Sigmoid colon (tissue), 7 donors: ENCODE measurements at regions of chr20 and their contacts with region 1.

Region 1: GRCh38 chr20:62710886-62711493 is 2.4 kb downstream of the NTSR1 start:
- DNase-seq: peak; percentile 89
- H3K4me3 ChIP-seq: peak overlapping the region; percentile 23 to 72 (median 59)
- H3K27ac ChIP-seq: peak overlapping the region in 3 of 4 donors; percentile 79 to 96 (median 88)
- H3K4me1 ChIP-seq: peaks cover 0 to 62% (median 60%) of the 10 kb centered on the region in 4 donors
- H3K27me3 ChIP-seq: peaks cover 7 to 32% (median 27%) of the 10 kb centered on the region in 3 donors
- CTCF ChIP-seq: no peak
- EP300 ChIP-seq: no peak
- POLR2A ChIP-seq: peak in 1 of 2 donors; percentile 62

Region 2: GRCh38 chr20:62752671-62753501 is 41.9 kb after region 1 on chr20:
- intact Hi-C with region 1: loop called (anchors 5 kb)
- DNase-seq: no peak
- H3K4me3 ChIP-seq: peak overlapping the region in 2 of 4 donors; percentile 13 to 15
- H3K27ac ChIP-seq: peak overlapping the region; percentile 61 to 82 (median 69)
- H3K4me1 ChIP-seq: peaks cover 0 to 60% (median 38%) of the 10 kb centered on the region in 4 donors
- H3K27me3 ChIP-seq: no peaks in the 10 kb centered on the region
- CTCF ChIP-seq: no peak
- EP300 ChIP-seq: no peak
- POLR2A ChIP-seq: no peak

Region 3: GRCh38 chr20:62768481-62769287 is 57.7 kb after region 1 on chr20:
- intact Hi-C with region 1: no loop called
- DNase-seq: no peak
- H3K4me3 ChIP-seq: no peak overlapping the region
- H3K27ac ChIP-seq: peak overlapping the region in 1 of 4 donors; percentile 19
- H3K4me1 ChIP-seq: peaks cover 0 to 28% (median 14%) of the 10 kb centered on the region in 4 donors
- H3K27me3 ChIP-seq: no peaks in the 10 kb centered on the region
- CTCF ChIP-seq: no peak
- EP300 ChIP-seq: no peak
- POLR2A ChIP-seq: no peak